ENCODE measurements at regions of chr4 and their contacts with region 1.

Region 1: DNA sequence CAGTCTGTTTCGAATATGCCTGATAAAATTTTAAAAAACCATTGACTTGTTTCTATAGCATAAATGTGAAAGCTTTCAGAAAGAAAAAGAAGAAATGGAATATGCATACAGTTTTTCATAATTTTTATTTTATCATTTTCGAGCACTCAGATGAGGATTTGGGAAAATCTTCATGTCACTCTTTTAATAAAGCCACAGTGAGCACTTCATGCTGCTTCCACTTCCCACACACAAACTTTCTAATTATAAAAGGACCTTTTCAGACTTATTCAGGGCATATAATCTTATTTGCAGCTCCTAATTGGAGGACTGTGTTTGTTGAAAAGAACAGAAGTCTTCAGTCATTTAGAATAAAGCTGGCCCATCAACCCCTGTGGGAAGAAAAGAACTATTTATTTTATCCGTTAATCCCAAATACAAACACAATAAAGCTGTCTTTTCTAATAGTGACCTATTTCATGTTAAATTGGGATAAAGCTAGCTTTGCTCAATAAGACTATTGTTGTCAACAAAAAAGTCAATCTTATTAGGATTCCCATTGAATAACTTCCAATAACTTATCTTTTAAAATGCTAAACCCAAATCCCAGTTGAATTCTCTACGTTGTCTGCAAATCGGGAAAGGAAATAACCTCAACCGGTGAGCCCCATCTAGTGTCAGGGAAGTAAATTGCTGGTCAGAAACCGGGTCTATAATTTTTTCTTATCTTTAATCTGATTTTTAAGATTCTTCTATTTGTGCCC is 211.5 kb downstream of the PDGFRA start:
- DNase-seq: peak in 1 of 2 donors; percentile 18
- ATAC-seq: peak in 2 of 8 donors; percentile 53 to 81
- H3K4me3 ChIP-seq: peak overlapping the region in 7 of 10 donors; percentile 3 to 45 (median 20)
- H3K27ac ChIP-seq: peak overlapping the region in 7 of 10 donors; percentile 22 to 69 (median 40)
- H3K4me1 ChIP-seq: peaks cover 0 to 15% (median 0%) of the 10 kb centered on the region in 9 donors
- H3K27me3 ChIP-seq: peaks cover 0 to under 1% (median 0%) of the 10 kb centered on the region in 7 donors
- CTCF ChIP-seq: peak; percentile 30 to 77 (median 67)

Region 2: DNA sequence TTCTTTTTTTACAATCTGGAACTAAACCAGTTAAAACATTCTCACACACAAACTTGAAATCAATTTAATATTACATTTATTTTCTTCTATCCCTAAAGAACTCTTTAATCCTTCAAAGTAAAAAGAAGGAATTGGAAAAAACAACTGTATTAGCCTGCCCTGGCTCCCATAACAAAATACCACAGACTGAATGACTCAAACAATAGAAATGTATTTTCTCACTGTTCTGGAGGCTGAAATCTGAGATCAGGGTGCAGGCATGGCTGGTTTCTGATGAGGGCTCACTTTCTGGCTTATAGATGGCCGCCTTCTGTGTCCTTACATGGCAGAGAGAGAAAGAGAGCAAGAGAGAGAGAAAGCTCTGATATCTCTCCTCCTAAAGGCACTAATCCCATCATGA is 62.1 kb before region 1 on chr4:
- intact Hi-C with region 1: loop called in 4 of 10 experiments (anchors 2 to 10 kb)
- DNase-seq: no peak
- ATAC-seq: no peak
- H3K4me3 ChIP-seq: no peak overlapping the region
- H3K27ac ChIP-seq: no peak overlapping the region
- H3K4me1 ChIP-seq: no peaks in the 10 kb centered on the region
- H3K27me3 ChIP-seq: no peaks in the 10 kb centered on the region
- CTCF ChIP-seq: no peak

Region 3: DNA sequence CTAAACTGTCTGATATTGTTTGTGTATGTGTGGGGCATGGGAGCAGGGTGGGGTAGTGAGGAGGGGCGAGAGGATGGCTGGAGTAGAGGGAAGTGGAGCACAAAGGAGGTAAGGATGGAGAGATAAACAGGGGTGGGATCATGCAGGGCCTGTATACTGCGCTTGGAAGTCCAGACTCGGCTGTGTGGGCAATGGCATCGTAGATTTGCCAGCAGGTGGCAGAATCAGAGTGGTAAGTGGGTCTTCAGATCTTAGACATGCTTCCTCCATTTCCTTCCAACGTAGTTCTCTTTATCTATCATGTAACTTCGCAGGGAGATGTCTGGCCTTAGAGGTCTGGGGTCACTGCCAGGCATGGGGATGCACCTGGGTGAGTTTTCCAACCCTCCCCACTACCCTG is 56.0 kb before region 1 on chr4:
- intact Hi-C with region 1: loop called in 4 of 10 experiments (anchors 2 to 10 kb)
- DNase-seq: peak in 1 of 2 donors; percentile 24
- ATAC-seq: peak in 6 of 8 donors; percentile 23 to 68 (median 52)
- H3K4me3 ChIP-seq: no peak overlapping the region
- H3K27ac ChIP-seq: no peak overlapping the region
- H3K4me1 ChIP-seq: no peaks in the 10 kb centered on the region
- H3K27me3 ChIP-seq: no peaks in the 10 kb centered on the region
- CTCF ChIP-seq: peak in 7 of 9 donors; percentile 13 to 63 (median 50)

Region 4: GRCh38 chr4:54482529-54483200 is 42.1 kb after region 1 on chr4:
- intact Hi-C with region 1: no loop called
- DNase-seq: no peak
- ATAC-seq: no peak
- H3K4me3 ChIP-seq: no peak overlapping the region
- H3K27ac ChIP-seq: no peak overlapping the region
- H3K4me1 ChIP-seq: no peaks in the 10 kb centered on the region
- H3K27me3 ChIP-seq: no peaks in the 10 kb centered on the region
- CTCF ChIP-seq: no peak

Region 5: DNA sequence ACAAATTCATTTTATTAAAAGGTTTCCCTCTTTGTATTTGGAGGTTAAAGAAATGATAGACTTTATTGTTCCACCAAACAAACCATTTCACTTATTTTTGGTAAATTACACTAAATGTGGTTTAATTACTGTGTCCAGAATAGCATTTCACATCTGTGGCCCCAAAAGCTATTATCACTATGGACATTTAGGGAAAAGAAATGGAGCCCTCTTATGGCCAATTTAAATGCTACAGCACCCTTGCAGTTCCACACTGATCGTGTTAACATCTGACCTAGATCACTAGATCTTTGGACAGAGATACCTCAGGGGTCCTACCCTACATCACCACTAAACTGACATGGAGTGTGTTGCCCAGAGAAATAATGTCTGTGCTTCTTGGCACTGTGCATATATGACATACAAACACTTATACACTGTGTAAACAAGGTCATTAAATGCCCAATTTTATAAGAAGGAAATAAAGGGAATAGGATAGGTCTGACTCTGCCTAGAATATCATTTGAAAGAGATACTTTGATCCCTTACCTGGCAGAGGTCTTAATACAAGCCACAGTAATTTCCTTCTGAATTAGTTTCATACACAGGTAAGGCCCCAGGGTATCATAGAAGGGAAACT is 520.9 kb after region 1 on chr4:
- intact Hi-C with region 1: loop called in 1 of 10 experiments (anchors 10 kb)
- DNase-seq: no peak
- ATAC-seq: peak in 5 of 8 donors; percentile 31 to 79 (median 64)
- H3K4me3 ChIP-seq: no peak overlapping the region
- H3K27ac ChIP-seq: no peak overlapping the region
- H3K4me1 ChIP-seq: no peaks in the 10 kb centered on the region
- H3K27me3 ChIP-seq: no peaks in the 10 kb centered on the region
- CTCF ChIP-seq: peak; percentile 35 to 72 (median 67)

Measured in heart right ventricle (tissue), 16 donors.